ENCODE measurements at regions of chr15 and their contacts with region 1.

Region 1: DNA sequence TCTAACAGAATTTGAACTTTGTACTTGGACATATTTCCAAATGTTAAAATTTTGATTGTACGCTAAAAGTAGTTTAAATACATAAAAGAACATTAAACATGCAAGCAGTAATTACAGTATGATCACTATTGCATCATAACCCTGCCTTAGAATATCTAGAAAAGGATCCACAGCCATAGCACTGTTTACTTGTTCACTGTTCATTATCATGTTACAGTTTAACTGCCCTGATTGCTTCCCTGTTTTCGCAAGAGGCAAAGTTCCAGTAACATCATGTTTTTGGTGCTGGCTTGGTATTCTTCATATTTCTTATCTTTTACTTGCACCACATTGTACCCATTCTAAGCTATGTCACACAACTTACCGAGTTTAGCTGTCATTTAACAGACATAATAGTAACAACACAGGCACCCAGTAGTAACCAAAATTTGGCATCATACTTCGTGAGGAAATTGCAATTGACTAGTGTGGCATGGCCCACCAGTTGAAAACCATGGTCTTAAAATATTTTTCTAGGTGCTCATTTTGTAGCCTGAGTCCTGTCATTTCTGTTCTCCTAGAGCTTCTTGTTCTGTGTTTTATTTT is 13.3 kb upstream of the TMEM87A start:
- DNase-seq: no peak
- H3K4me3 ChIP-seq: no peak overlapping the region
- H3K27ac ChIP-seq: no peak overlapping the region
- H3K4me1 ChIP-seq: no peaks in the 10 kb centered on the region
- H3K27me3 ChIP-seq: no peaks in the 10 kb centered on the region
- CTCF ChIP-seq: no peak

Region 2: DNA sequence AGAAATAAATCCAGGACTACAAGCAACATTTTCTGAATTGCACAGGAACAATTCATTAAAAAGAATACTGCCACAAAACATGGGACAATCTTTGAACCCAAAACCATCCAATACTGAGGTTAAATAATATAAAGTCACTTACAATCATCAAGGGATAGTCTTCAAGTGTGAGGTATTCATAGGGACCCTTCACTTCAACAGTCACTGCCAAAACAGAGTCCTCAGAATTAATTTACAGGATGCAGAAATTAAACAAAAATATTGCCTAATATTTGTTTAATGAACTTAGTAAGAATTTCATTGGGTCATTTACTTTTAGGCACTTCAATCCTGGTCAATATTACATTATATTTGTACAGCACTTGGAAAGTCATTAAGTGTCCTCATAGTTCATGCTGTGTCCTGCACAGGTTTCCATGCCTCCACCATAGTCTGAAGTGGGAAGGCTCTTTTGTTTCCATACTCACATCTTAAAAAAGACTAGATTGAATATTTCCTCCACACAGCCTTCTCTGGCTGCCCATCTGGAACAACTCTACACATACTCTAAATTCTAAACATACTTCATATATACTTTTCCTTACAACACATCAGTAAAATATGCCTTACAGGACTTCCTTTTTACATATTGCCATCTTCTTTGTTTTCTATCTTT is 46.9 kb before region 1 on chr15:
- CTCF ChIA-PET with region 1: interaction called, 5 read pairs
- dilution Hi-C with region 1: loop called (anchors 5 kb)
- in situ Hi-C with region 1: no loop called
- intact Hi-C with region 1: no loop called
- DNase-seq: no peak
- H3K4me3 ChIP-seq: no peak overlapping the region
- H3K27ac ChIP-seq: no peak overlapping the region
- H3K4me1 ChIP-seq: no peaks in the 10 kb centered on the region
- H3K27me3 ChIP-seq: no peaks in the 10 kb centered on the region
- CTCF ChIP-seq: no peak

Region 3: GRCh38 chr15:43531018-43531670 is 1244.6 kb after region 1 on chr15:
- CTCF ChIA-PET with region 1: interaction called, 22 read pairs
- dilution Hi-C with region 1: no loop called
- in situ Hi-C with region 1: no loop called
- intact Hi-C with region 1: no loop called
- DNase-seq: no peak
- H3K4me3 ChIP-seq: no peak overlapping the region
- H3K27ac ChIP-seq: no peak overlapping the region
- H3K4me1 ChIP-seq: no peaks in the 10 kb centered on the region
- H3K27me3 ChIP-seq: no peaks in the 10 kb centered on the region
- CTCF ChIP-seq: no peak

Measured in mammary epithelial cell (primary cell).